B cell (primary cell): ENCODE measurements at regions of chr12 and their contacts with region 1.

Region 1: GRCh38 chr12:31272607-31273225 is 53.2 kb downstream of the SINHCAF start:
- DNase-seq: no peak
- ATAC-seq: no peak
- H3K4me3 ChIP-seq: no peak overlapping the region
- H3K4me3 Mint-ChIP-seq: no peak overlapping the region
- H3K27ac ChIP-seq: no peak overlapping the region
- H3K27ac Mint-ChIP-seq: no peak overlapping the region
- H3K4me1 ChIP-seq: no peaks in the 10 kb centered on the region
- H3K4me1 Mint-ChIP-seq: peaks cover 3% of the 10 kb centered on the region
- H3K27me3 ChIP-seq: no peaks in the 10 kb centered on the region
- H3K27me3 Mint-ChIP-seq: no peaks in the 10 kb centered on the region
- CTCF ChIP-seq: no peak

Region 2: DNA sequence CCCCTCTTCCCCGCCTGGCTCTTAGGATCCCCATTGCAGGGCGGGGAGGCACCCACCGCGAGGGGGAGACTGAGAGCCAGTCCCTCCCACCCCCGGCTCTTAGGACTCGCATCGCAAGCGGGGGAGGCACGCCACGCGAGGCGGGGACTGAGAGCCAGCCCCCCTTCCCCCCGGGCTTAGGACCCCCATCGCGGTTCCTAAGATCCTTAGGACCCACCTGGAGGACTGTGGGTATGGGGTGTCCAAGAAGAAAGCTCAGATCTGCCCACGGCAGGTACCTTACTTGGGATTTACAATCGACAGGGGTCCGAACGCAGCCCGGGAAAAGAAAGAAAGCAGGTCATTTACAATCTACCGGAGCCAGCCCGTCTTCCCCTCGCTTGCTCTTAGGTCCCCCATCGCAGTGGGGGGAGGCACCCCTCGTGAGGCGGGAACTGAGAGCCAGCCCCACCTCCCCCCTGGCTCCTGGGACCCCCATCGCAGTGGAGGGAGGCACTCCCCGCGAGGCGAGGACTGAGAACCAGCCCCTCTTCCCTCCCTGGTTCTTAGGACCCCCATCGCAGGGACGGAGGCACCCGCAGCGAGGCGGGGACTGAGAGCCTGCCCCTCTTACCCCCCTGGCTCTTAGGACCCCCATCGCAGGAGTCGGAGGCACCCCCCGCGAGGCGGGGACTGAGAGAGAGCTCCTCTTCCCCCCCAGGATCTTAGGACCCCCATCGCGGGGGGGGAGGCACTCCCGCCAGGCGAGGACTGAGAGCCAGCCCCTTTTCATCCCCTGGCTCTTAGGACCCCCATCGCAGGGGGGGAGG is 155.3 kb before region 1 on chr12:
- CTCF ChIA-PET with region 1: interaction called, 12 read pairs
- POLR2A ChIA-PET with region 1: no interaction called
- intact Hi-C with region 1: loop called (anchors 1 kb)
- DNase-seq: peak; percentile 83
- ATAC-seq: peak; percentile 76
- H3K4me3 ChIP-seq: peak overlapping the region in 4 of 5 experiments; percentile 37 to 65 (median 56)
- H3K4me3 Mint-ChIP-seq: peak overlapping the region; percentile 85
- H3K27ac ChIP-seq: no peak overlapping the region
- H3K27ac Mint-ChIP-seq: peak overlapping the region; percentile 41
- H3K4me1 ChIP-seq: peaks cover 28 to 32% of the 10 kb centered on the region in 2 donors
- H3K4me1 Mint-ChIP-seq: peaks cover 4% of the 10 kb centered on the region
- H3K27me3 ChIP-seq: peaks cover 0 to 34% (median 6%) of the 10 kb centered on the region in 4 experiments
- H3K27me3 Mint-ChIP-seq: peaks cover 2% of the 10 kb centered on the region
- CTCF ChIP-seq: peak; percentile 72

Region 3: DNA sequence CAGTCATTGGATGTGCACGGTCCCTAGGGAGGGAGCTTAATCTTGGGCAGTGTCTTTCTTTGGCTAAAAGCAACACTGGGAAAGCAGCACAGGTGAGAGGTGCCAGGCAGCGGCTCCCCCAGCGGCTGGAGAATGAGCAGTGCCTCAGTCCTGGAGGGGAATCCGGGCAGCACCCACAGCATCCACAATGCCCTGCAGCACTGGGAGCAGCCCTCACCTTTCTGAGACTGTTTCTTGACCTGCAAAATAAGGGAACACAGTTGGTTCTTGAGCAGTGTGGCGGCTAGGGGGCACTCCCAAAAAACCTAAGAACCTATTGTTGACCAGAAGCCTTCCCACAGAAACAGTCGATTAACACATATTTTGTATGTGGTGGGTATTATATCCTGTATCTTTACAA is 22.5 kb before region 1 on chr12:
- CTCF ChIA-PET with region 1: interaction called, 39 read pairs
- POLR2A ChIA-PET with region 1: no interaction called
- intact Hi-C with region 1: no loop called
- DNase-seq: no peak
- ATAC-seq: no peak
- H3K4me3 ChIP-seq: no peak overlapping the region
- H3K4me3 Mint-ChIP-seq: no peak overlapping the region
- H3K27ac ChIP-seq: no peak overlapping the region
- H3K27ac Mint-ChIP-seq: no peak overlapping the region
- H3K4me1 ChIP-seq: no peaks in the 10 kb centered on the region
- H3K4me1 Mint-ChIP-seq: no peaks in the 10 kb centered on the region
- H3K27me3 ChIP-seq: peaks cover 0 to 2% (median 0%) of the 10 kb centered on the region in 4 experiments
- H3K27me3 Mint-ChIP-seq: no peaks in the 10 kb centered on the region
- CTCF ChIP-seq: no peak

Region 4: DNA sequence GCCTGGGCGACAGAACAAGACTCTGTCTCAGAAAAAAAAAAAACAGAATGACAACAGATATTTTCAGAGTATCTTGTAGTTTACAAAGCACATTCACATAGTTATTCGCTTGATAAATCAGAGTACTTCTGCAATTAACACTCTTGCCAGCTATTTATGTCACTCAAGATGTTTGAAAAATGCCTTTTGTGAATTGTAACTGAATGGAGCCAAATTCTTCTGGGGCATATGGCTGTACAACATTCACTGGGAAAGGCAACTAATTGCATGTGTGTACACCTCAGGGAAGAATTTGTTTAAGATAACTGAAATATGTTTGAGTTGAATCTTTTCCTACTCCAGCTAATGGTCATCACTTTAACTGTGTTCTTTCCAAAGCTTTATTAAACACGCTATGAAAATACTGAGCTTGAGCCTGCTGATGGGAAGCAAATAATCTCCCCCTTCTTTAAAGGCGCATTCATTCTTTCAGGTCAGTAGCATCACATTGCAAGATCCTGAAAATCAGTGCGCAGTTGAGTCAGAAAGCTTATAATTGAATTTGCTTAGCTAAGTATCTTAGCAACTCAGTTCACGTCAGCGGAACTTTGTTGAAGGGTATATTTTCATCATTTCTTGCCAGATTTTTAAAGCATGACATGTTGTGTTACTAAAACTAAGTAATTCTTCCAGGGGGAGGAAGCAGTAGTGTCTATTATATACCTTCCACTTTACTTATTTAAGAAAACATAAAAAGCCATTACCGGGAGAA is 13.4 kb before region 1 on chr12:
- CTCF ChIA-PET with region 1: interaction called, 27 read pairs
- POLR2A ChIA-PET with region 1: no interaction called
- intact Hi-C with region 1: no loop called
- DNase-seq: no peak
- ATAC-seq: no peak
- H3K4me3 ChIP-seq: no peak overlapping the region
- H3K4me3 Mint-ChIP-seq: no peak overlapping the region
- H3K27ac ChIP-seq: no peak overlapping the region
- H3K27ac Mint-ChIP-seq: no peak overlapping the region
- H3K4me1 ChIP-seq: no peaks in the 10 kb centered on the region
- H3K4me1 Mint-ChIP-seq: no peaks in the 10 kb centered on the region
- H3K27me3 ChIP-seq: no peaks in the 10 kb centered on the region
- H3K27me3 Mint-ChIP-seq: no peaks in the 10 kb centered on the region
- CTCF ChIP-seq: no peak

Region 5: GRCh38 chr12:31289441-31289840 is 16.7 kb after region 1 on chr12:
- CTCF ChIA-PET with region 1: interaction called, 31 read pairs
- POLR2A ChIA-PET with region 1: no interaction called
- intact Hi-C with region 1: no loop called
- DNase-seq: no peak
- ATAC-seq: no peak
- H3K4me3 ChIP-seq: no peak overlapping the region
- H3K4me3 Mint-ChIP-seq: no peak overlapping the region
- H3K27ac ChIP-seq: no peak overlapping the region
- H3K27ac Mint-ChIP-seq: no peak overlapping the region
- H3K4me1 ChIP-seq: no peaks in the 10 kb centered on the region
- H3K4me1 Mint-ChIP-seq: no peaks in the 10 kb centered on the region
- H3K27me3 ChIP-seq: no peaks in the 10 kb centered on the region
- H3K27me3 Mint-ChIP-seq: no peaks in the 10 kb centered on the region
- CTCF ChIP-seq: no peak

Region 6: GRCh38 chr12:31297572-31298512 is 25.1 kb after region 1 on chr12:
- CTCF ChIA-PET with region 1: interaction called, 31 read pairs
- POLR2A ChIA-PET with region 1: interaction called, 5 read pairs
- intact Hi-C with region 1: no loop called
- DNase-seq: no peak
- ATAC-seq: peak; percentile 19
- H3K4me3 ChIP-seq: no peak overlapping the region
- H3K4me3 Mint-ChIP-seq: peak overlapping the region; percentile 75
- H3K27ac ChIP-seq: peak overlapping the region; percentile 27 to 66
- H3K27ac Mint-ChIP-seq: peak overlapping the region; percentile 86
- H3K4me1 ChIP-seq: peaks cover 25 to 27% of the 10 kb centered on the region in 2 donors
- H3K4me1 Mint-ChIP-seq: peaks cover 49% of the 10 kb centered on the region
- H3K27me3 ChIP-seq: no peaks in the 10 kb centered on the region
- H3K27me3 Mint-ChIP-seq: no peaks in the 10 kb centered on the region
- CTCF ChIP-seq: no peak

Region 7: DNA sequence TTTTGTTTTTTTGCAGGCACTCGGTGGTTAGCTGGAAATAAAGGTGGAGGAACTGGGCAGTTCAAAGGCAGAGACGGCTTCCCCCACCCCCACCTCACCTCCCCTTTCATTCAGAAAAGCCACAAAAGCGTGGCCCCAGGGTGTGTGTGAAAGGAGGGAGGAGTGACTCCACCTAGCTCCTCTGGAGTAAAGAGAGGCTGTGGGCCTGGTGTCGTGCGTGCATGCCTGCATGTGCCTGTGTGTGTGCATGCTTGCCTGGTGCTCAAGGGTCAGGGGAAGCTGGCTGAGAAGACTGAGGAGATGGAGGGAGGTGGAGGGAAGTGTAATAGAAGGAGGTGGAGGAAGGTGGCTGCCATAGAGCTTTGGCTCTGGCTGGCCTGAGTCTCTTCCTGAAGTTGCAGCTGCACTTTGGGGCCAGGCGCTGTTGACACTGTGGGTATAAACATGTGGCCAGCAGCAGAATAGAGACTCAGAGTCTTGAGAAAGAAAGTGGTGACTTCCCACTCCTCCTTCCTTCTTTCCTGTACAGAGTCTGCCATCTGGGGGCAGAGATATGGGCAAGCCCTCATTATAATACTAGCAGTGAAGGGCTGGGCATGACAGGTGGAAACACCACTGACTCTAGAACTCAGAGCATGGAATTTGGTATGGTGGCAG is 90.2 kb after region 1 on chr12:
- CTCF ChIA-PET with region 1: interaction called, 17 read pairs
- POLR2A ChIA-PET with region 1: no interaction called
- intact Hi-C with region 1: no loop called
- DNase-seq: peak; percentile 60
- ATAC-seq: peak; percentile 80
- H3K4me3 ChIP-seq: peak overlapping the region in 2 of 5 experiments; percentile 19 to 25
- H3K4me3 Mint-ChIP-seq: peak overlapping the region; percentile 59
- H3K27ac ChIP-seq: peak overlapping the region in 1 of 2 donors; percentile 7
- H3K27ac Mint-ChIP-seq: peak overlapping the region; percentile 46
- H3K4me1 ChIP-seq: peaks cover 16 to 21% of the 10 kb centered on the region in 2 donors
- H3K4me1 Mint-ChIP-seq: peaks cover 22% of the 10 kb centered on the region
- H3K27me3 ChIP-seq: no peaks in the 10 kb centered on the region
- H3K27me3 Mint-ChIP-seq: no peaks in the 10 kb centered on the region
- CTCF ChIP-seq: no peak